GM10248 (cell line): ENCODE measurements at regions of chr11 and their contacts with region 1.

Region 1: DNA sequence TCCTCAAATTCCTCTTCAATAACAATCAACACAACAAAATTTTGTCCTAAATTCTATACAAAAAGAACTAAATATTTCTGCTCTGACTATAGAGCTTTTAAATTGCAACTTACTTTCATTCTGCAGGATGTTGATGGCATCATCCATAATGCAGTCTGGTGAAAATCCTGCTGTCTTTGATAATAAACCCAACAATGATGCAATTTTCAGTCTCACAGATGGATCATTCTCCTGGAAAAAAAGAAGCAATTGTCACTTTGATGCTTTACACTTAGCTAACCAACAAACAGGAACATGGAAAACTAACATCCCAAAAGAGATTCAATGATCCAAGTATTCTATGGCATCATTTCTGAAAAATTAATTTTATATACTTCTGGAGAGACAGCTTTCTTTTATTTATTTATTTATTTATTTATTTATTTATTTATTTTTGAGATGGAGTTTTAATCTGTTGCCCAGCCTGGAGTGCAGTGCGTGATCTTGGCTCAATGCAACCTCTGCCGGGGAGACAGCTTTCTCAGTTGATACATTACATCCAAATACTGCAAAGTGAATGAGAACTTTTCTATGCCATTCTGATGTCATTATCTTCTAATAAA is 13.0 kb downstream of the INTS4 start:
- DNase-seq: no peak
- CTCF ChIP-seq: no peak

Region 2: DNA sequence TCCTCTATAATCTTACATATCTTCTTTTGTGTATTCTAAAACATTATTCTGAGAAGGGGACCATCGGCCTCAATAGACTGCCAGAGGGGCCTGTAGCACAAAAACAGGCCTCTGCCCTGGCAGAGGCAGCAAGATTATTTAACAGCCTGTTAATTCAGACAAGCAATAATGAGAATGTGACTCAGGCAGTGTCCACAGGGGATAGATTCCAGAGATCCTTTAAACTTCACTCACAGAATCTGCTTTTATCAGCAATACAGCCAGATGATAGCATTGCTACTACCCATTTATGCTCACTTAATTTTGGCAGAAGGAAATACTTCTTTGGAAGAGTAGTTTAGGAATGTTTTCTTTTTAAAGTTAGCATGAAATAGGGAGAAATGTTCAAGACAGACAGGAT is 115.6 kb before region 1 on chr11:
- CTCF ChIA-PET with region 1: no interaction called
- POLR2A ChIA-PET with region 1: no interaction called
- DNase-seq: no peak
- CTCF ChIP-seq: no peak

Region 3: GRCh38 chr11:77968337-77968736 is 13.1 kb before region 1 on chr11:
- CTCF ChIA-PET with region 1: interaction called, 15 read pairs
- POLR2A ChIA-PET with region 1: no interaction called
- DNase-seq: peak; percentile 24
- CTCF ChIP-seq: no peak

Region 4: GRCh38 chr11:77994412-77995362 is 13.2 kb after region 1 on chr11 and contains the start of gene INTS4:
- CTCF ChIA-PET with region 1: interaction called, 8 read pairs
- POLR2A ChIA-PET with region 1: interaction called, 17 read pairs
- DNase-seq: peak; percentile 95
- CTCF ChIP-seq: no peak